Gastrocnemius medialis (tissue), 4 donors: ENCODE measurements at regions of chr6 and their contacts with region 1.

Region 1: GRCh38 chr6:152343735-152344360 is 293.3 kb downstream of the SYNE1 start:
- DNase-seq: peak; percentile 22 to 70
- ATAC-seq: peak; percentile 81 to 89
- H3K4me3 ChIP-seq: no peak overlapping the region
- H3K27ac ChIP-seq: peak overlapping the region; percentile 74 to 84 (median 78)
- H3K4me1 ChIP-seq: peaks cover 13 to 16% of the 10 kb centered on the region in 2 donors
- H3K27me3 ChIP-seq: no peaks in the 10 kb centered on the region
- CTCF ChIP-seq: no peak
- POLR2A ChIP-seq: no peak

Region 2: DNA sequence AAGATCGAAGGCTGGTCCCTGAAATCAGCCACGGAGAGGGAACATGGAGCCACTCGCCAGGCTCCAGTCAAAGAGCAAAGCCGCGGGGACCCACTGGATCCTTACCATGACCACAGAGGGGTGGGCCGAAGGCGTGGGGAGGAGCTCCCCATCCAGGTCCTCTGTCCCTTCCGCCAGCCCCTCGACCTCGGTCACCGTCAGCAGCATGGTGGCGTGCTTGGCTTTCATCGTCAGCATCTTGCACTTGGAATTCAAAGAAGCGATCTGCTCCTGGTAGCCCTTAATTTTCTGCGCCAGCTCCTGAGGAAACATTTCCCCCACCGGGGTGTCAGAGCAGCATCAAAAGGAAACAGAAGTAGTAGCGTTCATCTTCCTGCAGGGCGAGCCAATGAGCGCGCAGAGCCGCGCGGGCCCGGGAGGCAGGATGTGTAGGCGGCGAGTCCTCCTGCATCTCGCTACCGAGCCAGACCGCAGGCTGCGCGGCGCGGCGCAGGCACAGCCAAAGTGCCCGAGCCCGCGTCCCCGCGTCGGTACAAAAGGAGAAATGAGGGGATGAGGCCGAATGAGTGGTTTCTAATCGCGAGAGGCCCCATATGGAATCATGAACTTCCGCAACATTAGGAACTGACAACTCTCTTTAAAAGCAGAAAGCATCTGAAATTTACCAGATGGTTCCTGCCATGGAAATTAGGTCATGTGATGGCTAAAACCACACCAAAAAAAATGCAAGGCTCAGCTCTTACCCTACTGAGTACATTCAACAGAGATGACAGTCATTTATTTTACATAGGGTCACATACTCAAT is 41.9 kb before region 1 on chr6:
- in situ Hi-C with region 1: no loop called
- intact Hi-C with region 1: loop called (anchors 5 kb)
- DNase-seq: peak; percentile 56 to 76
- ATAC-seq: peak; percentile 86 to 94
- H3K4me3 ChIP-seq: peak overlapping the region; percentile 47 to 58 (median 51)
- H3K27ac ChIP-seq: peak overlapping the region; percentile 58 to 66 (median 64)
- H3K4me1 ChIP-seq: peaks cover 11 to 12% of the 10 kb centered on the region in 2 donors
- H3K27me3 ChIP-seq: no peaks in the 10 kb centered on the region
- CTCF ChIP-seq: peak; percentile 24 to 67 (median 59)
- POLR2A ChIP-seq: peak; percentile 20 to 43